ENCODE measurements at regions of chr1 and their contacts with region 1.

Region 1: GRCh38 chr1:79353224-79353623 is 346.7 kb upstream of the ADGRL4 start:
- H3K4me3 ChIP-seq: no peak overlapping the region
- H3K27ac ChIP-seq: no peak overlapping the region
- H3K4me1 ChIP-seq: no peaks in the 10 kb centered on the region
- CTCF ChIP-seq: no peak

Region 2: DNA sequence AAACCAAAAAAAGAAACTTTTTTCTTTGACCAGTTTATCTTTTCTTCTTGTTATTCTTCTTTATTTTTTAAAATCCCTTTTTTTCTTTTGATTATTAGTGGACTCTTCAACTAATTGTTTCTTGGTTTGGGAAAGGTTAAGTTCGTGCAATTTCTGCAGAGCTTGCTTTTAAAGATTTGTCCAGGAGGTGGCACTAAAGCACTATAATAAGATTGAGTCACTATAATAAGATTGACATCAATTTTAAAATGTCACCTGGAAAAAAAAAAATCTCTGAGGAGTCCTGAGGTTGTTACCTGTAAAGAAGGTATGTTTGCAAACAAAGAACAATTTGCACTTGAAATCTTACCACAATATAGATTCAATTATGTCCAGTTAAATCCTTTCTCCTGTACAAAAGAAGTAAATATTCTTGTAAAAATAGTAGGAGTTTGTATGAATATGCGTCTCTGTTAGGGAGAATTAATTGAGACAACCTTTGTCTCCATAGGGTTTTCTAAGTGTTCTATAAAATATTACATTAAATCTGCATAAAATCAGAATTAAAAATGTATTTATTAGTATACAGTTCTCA is 513.4 kb before region 1 on chr1:
- CTCF ChIA-PET with region 1: interaction called, 12 read pairs
- POLR2A ChIA-PET with region 1: no interaction called
- H3K4me3 ChIP-seq: no peak overlapping the region
- H3K27ac ChIP-seq: no peak overlapping the region
- H3K4me1 ChIP-seq: peaks cover 7% of the 10 kb centered on the region; the same call in 1 of the 2 replicates
- CTCF ChIP-seq: no peak

Region 3: GRCh38 chr1:79259388-79260336 is 93.6 kb before region 1 on chr1:
- CTCF ChIA-PET with region 1: interaction called, 18 read pairs
- POLR2A ChIA-PET with region 1: no interaction called
- H3K4me3 ChIP-seq: no peak overlapping the region
- H3K27ac ChIP-seq: no peak overlapping the region
- H3K4me1 ChIP-seq: peaks cover 6% of the 10 kb centered on the region
- CTCF ChIP-seq: 0 out of 2 replicates have a peak, but pooled peaks have one; percentile 9

Region 4: GRCh38 chr1:79519084-79519760 is 166.0 kb after region 1 on chr1:
- CTCF ChIA-PET with region 1: no interaction called
- POLR2A ChIA-PET with region 1: no interaction called
- H3K4me3 ChIP-seq: no peak overlapping the region
- H3K27ac ChIP-seq: no peak overlapping the region
- H3K4me1 ChIP-seq: no peaks in the 10 kb centered on the region
- CTCF ChIP-seq: no peak